ENCODE measurements at regions of chr13 and their contacts with region 1.

Region 1: GRCh38 chr13:41562083-41562482 is 104.7 kb downstream of the RGCC start:
- DNase-seq: peak; percentile 81 to 99 (median 89)

Region 2: DNA sequence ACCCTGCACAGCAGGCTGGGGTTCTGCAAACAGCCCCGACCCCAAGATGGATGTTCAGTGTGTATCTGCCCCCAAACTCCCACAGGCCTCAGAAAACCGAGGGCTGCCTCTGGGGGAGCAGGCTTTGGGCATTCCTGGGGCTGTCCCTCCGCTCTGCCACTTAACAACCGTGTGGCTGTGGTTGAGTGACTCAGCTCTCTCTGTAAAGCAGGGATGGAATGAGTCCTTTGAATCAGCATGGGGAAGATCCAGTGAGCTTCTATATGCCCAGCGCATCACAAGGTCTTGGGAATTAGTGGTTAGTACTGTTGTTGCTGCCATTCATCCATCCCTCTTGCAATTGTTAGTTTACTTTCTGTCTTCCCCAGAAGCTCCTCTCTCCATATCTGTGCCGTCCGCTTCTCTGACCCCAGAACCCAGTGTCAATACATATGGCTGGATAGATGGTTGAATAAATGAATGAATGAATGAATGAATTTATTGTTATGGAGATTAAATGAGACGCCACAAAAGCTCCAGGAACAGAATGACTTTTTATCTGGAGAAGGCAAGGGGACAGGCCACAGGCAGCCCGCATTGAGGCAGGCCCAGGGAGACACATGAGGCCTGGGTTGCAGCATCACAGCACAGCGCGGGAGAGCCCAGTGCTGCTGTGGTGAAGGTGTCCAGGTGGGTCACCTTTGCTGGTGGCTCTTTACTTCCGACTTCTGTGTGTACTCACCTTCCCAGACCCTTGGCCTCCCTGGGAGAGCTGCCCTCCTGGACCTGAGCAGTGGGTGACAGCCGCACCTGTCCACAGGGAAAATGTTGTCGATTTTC is 15.5 kb before region 1 on chr13:
- intact Hi-C with region 1: loop called (anchors 1 kb)
- DNase-seq: peak in 2 of 10 donors; percentile 43 to 85

Region 3: DNA sequence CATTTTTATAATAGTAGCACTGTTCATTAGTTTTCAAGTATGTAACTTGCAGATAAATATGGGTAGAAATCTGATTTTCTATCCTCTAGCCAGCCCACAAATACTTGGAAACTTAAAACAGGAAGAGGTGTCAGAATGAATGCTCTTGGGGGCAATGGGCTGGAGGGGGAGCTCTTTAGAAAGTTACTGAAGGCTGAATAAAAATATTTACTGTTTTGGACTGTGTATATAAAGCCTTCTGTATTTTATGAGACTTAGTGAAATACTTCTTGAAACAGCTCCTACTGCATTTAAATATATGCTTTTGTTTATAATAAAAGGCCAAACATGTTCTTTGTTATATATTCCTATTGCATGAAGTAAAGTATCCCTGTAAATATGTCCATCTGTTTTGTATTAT is 34.1 kb after region 1 on chr13:
- intact Hi-C with region 1: loop called (anchors 1 kb)
- DNase-seq: no peak

Measured in posterior cingulate gyrus (tissue), 11 donors.